ENCODE measurements at regions of chr20 and their contacts with region 1.

Region 1: GRCh38 chr20:50029697-50030461 is 47.1 kb downstream of the SNAI1 start:
- DNase-seq: peak; percentile 87 to 91
- H3K4me3 ChIP-seq: no peak overlapping the region
- H3K4me3 Mint-ChIP-seq: no peak overlapping the region
- H3K27ac Mint-ChIP-seq: peak overlapping the region; percentile 88
- H3K4me1 ChIP-seq: peaks cover 52% of the 10 kb centered on the region
- H3K4me1 Mint-ChIP-seq: peaks cover 41% of the 10 kb centered on the region
- H3K27me3 ChIP-seq: no peaks in the 10 kb centered on the region
- H3K27me3 Mint-ChIP-seq: no peaks in the 10 kb centered on the region
- CTCF ChIP-seq: no peak

Region 2: DNA sequence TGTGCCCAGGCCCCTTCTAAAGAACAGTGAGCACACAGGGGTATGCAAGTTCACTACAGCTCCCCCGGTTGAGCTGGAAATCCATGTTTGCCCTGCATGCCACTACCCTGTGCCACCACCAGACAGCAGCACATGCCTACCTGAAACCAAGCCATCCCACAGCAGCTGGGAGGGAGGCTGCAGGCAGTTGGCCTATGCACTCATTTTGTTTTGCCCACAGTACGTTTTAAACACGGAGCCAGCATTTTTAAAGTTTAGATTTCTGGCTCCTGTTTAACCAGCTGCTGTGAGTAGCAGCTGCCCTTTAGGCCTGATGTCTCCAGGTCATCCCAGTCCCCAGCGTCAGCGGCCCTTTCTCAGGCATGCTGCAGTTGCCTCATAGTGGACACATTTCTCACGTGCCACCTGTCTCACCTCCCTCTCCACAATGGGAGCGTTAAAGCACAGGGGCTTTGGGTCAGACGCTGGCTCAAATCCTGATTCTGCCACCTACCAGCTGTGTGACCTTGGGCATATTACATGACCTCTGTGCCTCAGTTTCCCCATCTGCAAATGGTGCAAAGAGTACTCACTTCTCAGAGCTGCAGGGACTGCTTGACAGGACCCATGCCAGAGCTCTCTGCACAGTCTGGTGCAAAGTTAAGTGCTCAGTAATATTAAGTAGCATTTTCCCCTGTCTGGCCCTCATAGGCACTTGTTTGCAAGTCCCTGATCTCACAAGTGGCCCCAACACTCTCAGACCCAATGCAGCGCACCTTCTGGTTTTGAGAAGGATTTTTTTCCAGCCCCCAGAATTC is 91.2 kb after region 1 on chr20:
- CTCF ChIA-PET with region 1: no interaction called
- POLR2A ChIA-PET with region 1: no interaction called
- intact Hi-C with region 1: no loop called
- DNase-seq: peak; percentile 86 to 88
- H3K4me3 ChIP-seq: no peak overlapping the region
- H3K4me3 Mint-ChIP-seq: no peak overlapping the region
- H3K27ac Mint-ChIP-seq: peak overlapping the region; percentile 27
- H3K4me1 ChIP-seq: peaks cover 15% of the 10 kb centered on the region
- H3K4me1 Mint-ChIP-seq: peaks cover 18% of the 10 kb centered on the region
- H3K27me3 ChIP-seq: no peaks in the 10 kb centered on the region
- H3K27me3 Mint-ChIP-seq: no peaks in the 10 kb centered on the region
- CTCF ChIP-seq: peak; percentile 98 to 99

Region 3: DNA sequence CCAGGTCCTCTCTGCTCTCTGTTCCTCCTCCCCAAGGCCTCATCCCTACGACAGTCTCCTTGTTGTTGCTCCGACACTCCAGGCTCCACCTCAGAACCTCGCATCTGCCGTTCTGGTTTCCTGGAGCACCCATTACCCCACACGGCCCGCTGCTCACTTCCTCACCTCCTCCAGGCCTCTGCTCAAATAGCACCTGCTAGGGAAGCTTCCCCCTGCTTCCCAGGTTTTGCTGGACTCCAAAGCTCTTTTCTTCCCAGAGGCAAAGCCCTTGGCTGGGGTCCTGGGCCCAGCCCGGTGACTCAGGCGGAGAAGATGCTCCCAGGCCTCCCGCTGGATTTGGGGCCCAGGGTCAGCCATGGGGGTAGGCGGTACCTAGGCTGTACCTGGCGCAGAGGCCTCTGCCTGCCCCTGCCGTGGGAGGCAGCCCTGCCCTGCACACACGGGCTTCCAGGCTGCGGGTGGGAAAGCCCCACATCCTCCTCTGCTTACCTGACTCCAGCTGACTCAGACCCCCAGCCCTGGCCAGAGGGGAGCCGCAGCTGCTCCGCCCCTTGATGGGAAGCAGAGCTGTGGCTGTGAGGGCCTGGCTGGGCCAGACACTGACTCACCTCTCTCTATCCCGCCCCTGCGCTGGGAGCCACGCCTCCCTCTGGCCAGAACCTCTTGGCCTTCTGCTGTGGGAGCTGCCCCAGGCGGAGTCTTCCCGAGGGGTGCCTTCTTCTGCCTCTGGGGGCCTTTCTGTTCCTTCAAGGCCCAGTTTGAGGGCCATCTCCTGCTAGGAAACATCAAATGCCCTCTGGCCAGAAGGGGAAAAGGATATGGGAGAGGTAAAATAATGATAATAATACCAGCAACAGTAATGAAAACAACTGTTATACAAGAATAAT is 291.3 kb after region 1 on chr20:
- CTCF ChIA-PET with region 1: no interaction called
- POLR2A ChIA-PET with region 1: interaction called, 25 read pairs
- intact Hi-C with region 1: no loop called
- DNase-seq: peak; percentile 75 to 85
- H3K4me3 ChIP-seq: no peak overlapping the region
- H3K4me3 Mint-ChIP-seq: no peak overlapping the region
- H3K27ac Mint-ChIP-seq: peak overlapping the region; percentile 1
- H3K4me1 ChIP-seq: peaks cover 15% of the 10 kb centered on the region
- H3K4me1 Mint-ChIP-seq: peaks cover 14% of the 10 kb centered on the region
- H3K27me3 ChIP-seq: no peaks in the 10 kb centered on the region
- H3K27me3 Mint-ChIP-seq: no peaks in the 10 kb centered on the region
- CTCF ChIP-seq: no peak

Measured in Caco-2 (cell line).